Posterior cingulate gyrus (tissue), 11 donors: ENCODE measurements at regions of chr14 and their contacts with region 1.

Region 1: DNA sequence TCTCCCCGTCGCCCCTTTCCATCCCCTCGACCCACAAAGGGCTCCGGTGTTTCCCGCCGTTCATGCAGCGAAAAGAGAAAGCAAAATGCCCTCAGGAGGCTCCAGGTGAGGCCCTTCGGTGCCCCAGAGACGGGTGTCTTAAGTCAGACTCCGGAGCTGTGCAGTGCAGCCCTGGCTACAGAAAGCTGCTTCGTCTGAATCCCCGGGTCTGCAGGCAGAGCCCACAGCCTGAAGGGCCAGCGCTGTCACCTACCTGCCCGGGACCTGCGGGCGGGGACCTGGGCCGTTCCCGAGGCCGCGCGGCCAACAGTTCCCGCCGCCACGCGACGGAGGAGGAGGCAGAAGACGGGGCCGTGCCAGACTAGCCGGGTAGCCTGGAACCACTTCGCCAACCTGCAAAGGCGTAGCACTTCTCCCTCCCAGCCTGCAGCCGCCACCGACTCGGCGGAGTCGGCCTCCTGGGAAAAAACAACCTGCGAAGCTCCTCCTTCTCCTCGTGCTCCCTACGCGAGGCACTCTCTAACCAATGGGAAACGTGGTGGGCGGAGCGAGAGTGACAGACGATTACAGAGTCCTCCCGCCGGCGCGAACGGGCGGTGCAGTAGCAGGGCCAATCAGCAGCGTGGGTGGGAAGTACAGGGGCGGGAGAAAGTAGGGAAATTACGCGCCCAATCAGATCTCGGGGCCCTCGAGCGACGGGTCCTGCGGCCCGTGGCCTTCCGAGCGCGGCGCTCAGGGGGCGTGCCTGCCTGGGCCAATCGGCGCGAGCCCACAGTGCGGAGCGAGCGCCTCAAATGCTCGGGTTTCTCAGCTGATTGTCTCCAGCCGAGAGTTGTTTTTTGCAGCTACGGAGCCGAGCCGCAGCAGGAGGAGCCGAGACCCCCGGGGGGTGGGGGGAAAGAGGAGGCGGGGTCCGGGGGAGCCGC is at the starts of genes GPR137C and TXNDC16:
- DNase-seq: peak; percentile 100

Region 2: GRCh38 chr14:52369305-52369801 is 183.0 kb before region 1 on chr14:
- intact Hi-C with region 1: no loop called
- DNase-seq: peak in 1 of 10 donors; percentile 78

Region 3: DNA sequence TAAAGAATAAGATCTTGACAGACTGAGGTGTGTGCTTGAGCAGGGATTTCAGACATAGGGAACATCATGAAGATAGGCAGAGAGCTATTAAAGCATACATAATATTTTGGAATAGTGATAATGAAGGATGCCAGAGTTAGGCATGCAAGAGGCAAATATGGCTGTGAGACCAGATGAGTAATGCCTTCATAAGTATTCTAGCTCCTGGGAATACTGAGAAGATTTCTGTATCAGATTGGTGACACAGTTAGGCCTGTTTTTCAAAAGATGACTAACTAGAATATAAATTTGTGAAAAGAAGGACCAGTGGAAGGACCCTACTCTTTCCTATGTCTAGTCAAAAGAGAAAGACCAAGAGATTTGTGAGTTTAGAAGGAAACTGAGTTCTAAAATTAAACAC is 108.8 kb before region 1 on chr14:
- intact Hi-C with region 1: no loop called
- DNase-seq: no peak

Region 4: GRCh38 chr14:52575858-52576257 is 23.5 kb after region 1 on chr14:
- intact Hi-C with region 1: no loop called
- DNase-seq: no peak

Region 5: DNA sequence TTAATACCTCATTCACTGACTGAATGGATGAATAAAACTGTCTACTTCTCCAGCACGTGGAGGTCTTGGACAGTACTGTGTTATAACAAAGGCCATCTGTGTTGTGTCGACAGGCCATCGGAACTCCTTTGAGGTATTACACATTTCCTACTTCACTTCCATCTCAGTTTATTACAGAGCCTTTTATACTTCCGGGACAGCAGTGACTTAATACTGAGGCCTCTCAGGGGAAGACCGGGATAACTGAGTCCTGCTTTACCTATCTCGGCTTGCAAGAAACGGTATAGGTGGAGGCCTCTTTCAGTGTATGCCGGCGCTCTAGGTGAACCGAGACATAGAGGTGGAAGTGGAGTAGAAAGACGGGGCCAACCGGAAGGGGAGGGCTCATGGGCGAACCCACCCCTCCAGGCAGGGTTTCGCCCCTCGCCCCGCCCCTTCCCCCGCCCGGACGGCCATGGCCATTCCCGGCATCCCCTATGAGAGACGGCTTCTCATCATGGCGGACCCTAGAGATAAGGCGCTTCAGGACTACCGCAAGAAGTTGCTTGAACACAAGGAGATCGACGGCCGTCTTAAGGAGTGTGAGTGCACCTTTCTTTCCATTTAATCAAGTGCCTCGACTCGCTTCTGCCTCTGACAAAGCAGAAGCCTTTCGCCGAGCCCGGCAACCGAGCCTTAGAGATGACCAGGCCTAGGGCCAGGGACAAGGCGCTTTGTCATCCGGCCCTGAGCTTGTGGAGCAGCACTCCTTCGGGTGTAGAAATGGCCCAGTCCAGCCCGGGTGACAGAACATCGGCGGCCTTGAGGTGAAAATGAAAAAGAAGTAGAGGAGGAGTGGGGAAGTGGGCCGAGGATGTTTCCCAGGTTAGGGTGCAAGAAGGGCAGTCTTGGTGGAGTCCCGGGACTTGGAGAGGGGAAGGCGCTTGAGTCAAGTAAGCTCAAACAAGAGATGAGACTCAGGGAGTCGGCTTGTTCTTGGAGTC is 154.7 kb after region 1 on chr14 and contains the start of gene PSMC6:
- intact Hi-C with region 1: loop called (anchors 5 kb)
- DNase-seq: peak; percentile 90 to 99 (median 94)

Region 6: DNA sequence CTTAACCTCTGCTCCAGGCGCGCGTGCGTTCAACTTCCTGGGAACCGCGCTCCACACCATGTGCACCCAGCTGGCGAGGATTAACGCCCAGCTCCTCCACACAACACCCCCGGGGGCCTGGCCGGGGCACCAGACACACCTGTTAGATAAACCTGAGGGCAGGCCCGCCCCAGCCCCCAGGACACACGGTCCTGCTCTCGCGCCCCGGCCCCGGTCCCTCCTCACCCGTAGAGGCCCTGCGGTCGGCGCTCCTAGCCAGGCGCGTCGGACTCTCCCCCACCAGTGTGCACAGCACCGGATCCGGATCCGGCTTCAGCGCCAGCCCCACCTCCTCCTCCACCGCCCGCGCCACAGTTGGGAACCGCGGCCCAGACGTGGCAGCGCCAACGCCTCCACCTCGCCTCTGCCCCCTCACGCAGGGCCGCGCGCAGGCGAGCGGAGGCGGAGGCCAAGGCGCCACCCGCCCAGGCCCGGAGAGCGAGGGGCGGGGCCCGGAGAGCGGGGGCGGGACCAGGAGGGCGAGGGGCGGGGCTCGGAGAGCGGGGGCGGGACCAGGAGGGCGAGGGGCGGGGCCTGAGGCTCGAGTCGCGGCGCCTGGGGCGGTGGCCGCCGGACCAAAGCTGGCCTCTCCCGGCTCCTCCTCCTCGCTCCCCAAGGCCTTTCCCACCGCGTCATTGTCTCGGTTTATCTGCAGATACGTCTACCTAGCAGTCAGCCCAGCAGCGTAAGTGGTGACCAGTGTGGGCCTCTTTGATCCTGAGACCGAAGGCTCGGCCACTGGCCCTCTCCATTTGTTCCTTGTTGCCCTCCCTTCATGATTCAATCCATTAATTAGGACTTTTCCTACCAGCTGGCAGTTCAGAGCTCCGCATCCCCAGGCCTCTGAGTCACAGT is 239.1 kb after region 1 on chr14 and contains the start of gene GNPNAT1:
- intact Hi-C with region 1: loop called (anchors 10 kb)
- DNase-seq: peak; percentile 65 to 97 (median 76)

Region 7: DNA sequence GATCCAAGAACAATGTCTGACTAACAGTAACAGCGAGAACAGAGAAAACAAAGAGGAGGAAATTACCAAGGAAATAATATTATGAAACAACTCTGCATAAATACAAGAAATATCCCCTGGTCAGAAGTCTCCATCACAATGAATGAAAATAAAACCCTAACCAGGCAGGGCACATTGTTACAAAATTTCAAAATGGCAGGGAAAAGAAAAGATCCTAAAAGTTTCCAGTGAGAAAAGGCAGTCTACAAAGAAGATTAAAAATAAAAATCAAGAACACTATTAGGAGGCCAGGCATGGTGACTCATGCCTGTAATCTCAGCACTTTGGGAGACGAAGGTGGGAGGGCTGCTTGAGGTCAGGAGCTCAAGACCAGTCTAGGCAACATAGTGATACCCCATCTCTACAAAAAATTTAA is 350.7 kb after region 1 on chr14:
- intact Hi-C with region 1: no loop called
- DNase-seq: no peak